Activated CD4-positive, alpha-beta T cell treated with anti-CD3 and anti-CD28 coated beads, Interleukin-2, amount 10 ng/mL, durations not matched to agents 24 days and 14 days (primary cell): ENCODE measurements at regions of chr1 and their contacts with region 1.

Region 1: GRCh38 chr1:20165522-20165951 is 20.4 kb upstream of the UBXN10 start:
- DNase-seq: peak; percentile 78
- H3K4me3 Mint-ChIP-seq: no peak overlapping the region
- H3K27ac Mint-ChIP-seq: no peak overlapping the region
- H3K4me1 Mint-ChIP-seq: peaks cover 6% of the 10 kb centered on the region
- H3K27me3 Mint-ChIP-seq: peaks cover 8% of the 10 kb centered on the region

Region 2: DNA sequence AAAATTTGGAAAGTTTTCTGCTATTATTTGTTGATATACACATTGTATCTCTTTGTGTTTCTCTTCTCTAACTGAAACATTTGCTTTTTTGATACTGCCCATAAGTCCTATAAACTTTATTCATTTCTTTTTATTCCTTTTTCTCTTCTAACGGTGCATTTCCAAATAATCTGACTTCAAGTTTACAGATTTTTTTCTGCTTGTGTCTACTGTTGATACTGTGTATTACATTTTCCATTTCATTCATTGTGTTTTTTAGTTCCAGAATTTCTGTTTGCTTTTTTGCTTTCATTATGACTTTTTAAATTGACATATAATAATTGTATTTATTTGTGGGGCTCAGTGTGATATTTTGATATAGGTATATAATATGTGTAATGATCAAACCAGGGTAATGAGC is 147.8 kb before region 1 on chr1:
- intact Hi-C with region 1: no loop called
- DNase-seq: no peak
- H3K4me3 Mint-ChIP-seq: no peak overlapping the region
- H3K27ac Mint-ChIP-seq: no peak overlapping the region
- H3K4me1 Mint-ChIP-seq: no peaks in the 10 kb centered on the region
- H3K27me3 Mint-ChIP-seq: peaks cover 8% of the 10 kb centered on the region

Region 3: DNA sequence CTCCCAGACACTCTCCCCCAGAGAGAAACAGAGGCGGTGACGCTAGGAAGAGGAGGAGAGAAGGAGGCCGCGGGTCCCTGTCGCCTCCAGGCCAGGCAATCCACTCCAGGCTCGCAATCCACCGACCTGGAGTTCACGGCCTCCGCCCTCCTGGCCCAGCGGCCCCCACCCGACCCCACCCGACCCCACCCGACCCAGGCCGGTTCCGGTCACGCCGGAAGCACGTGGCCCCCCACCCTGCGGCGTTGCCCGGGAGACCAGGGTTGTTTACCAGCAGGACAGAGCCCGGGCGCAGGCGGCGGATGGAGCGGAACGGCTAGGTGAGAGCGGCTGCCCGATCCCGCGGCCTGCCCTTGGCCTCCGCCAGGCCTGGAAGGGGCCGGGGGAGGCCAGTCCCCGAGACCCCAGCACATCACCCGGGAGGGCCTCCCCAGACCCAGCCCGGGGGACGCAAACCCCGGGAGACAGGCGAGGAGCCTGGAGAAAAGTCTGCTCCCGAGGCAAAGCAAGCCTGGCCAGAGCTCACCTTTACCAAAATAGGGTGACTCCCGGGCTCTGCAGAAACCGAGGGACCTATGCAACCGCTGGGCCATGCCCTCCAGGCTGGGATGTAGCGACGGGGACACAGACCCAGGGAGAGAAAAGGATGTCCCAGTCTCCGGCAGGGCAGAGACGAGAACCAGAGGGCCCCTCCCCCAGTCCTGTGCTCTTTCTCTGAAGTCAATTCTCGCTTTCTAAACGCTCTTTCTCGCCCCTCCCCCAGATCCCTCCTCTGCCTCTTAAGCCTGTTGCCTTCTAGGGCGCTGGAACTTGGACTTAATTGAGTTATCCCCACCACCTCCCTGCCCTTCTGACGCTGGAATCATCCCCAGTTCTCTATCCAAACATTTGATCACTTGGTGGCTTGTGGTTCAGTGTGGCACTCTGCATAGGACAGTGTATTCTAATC is 20.6 kb after region 1 on chr1 and contains the starts of genes PLA2G2C and UBXN10:
- intact Hi-C with region 1: loop called (anchors 2 kb)
- DNase-seq: peak; percentile 92
- H3K4me3 Mint-ChIP-seq: peak within 1 kb of the TSS; percentile 80
- H3K27ac Mint-ChIP-seq: peak within 1 kb of the TSS; percentile 97
- H3K4me1 Mint-ChIP-seq: peaks cover 55% of the 10 kb centered on the region
- H3K27me3 Mint-ChIP-seq: peaks cover 27% of the 10 kb centered on the region
- total RNA-seq, gene PLA2G2C: 0.28 and 0.40 TPM in 2 replicates
- total RNA-seq, gene UBXN10: 1.2 and 1.3 TPM in 2 replicates

Region 4: DNA sequence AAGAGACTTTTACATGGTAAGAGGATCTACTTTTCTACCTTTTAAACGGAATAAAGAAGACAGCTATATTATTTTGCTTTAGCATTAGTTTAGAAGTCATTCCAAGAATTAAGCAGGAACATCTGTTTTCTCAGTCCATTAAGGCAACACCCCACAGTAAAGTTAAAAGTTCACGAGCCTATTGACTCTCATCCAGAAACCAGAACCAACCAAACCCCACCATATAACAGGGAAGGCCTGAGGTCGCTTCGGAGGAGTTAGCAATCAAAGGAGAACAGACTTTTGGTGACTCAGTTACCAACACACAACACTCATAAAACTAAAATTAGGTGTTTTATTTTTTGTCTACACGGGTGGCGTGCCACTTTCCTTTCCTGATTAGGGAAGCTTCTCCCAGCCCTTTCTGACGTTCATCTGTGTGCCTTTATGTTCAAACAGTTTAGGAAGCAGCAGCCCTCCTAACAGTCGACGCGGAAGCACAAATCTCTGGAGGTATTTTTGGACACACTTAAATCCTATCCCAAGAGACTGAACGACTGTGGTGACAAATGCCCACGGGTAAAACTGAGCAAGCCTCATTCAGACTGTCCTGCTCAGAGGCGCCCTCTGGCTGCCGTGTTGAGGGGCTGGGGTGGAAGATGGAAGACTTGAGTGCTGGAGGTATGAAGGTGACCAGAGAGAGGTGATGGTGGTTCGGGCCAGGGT is 29.4 kb after region 1 on chr1:
- intact Hi-C with region 1: loop called (anchors 1 kb)
- DNase-seq: peak; percentile 93
- H3K4me3 Mint-ChIP-seq: no peak overlapping the region
- H3K27ac Mint-ChIP-seq: no peak overlapping the region
- H3K4me1 Mint-ChIP-seq: peaks cover 6% of the 10 kb centered on the region
- H3K27me3 Mint-ChIP-seq: peaks cover 45% of the 10 kb centered on the region

Region 5: GRCh38 chr1:20485527-20486456 is 320.3 kb after region 1 on chr1 and contains the start of gene CAMK2N1:
- intact Hi-C with region 1: no loop called
- DNase-seq: peak; percentile 80
- H3K4me3 Mint-ChIP-seq: peak within 1 kb of the TSS; percentile 94
- H3K27ac Mint-ChIP-seq: no peak within 1 kb of the TSS
- H3K4me1 Mint-ChIP-seq: peaks cover 9% of the 10 kb centered on the region
- H3K27me3 Mint-ChIP-seq: peaks cover 77% of the 10 kb centered on the region
- total RNA-seq, gene CAMK2N1: 1.3 and 1.8 TPM in 2 replicates